ENCODE measurements at regions of chr17 and their contacts with region 1.

Region 1: DNA sequence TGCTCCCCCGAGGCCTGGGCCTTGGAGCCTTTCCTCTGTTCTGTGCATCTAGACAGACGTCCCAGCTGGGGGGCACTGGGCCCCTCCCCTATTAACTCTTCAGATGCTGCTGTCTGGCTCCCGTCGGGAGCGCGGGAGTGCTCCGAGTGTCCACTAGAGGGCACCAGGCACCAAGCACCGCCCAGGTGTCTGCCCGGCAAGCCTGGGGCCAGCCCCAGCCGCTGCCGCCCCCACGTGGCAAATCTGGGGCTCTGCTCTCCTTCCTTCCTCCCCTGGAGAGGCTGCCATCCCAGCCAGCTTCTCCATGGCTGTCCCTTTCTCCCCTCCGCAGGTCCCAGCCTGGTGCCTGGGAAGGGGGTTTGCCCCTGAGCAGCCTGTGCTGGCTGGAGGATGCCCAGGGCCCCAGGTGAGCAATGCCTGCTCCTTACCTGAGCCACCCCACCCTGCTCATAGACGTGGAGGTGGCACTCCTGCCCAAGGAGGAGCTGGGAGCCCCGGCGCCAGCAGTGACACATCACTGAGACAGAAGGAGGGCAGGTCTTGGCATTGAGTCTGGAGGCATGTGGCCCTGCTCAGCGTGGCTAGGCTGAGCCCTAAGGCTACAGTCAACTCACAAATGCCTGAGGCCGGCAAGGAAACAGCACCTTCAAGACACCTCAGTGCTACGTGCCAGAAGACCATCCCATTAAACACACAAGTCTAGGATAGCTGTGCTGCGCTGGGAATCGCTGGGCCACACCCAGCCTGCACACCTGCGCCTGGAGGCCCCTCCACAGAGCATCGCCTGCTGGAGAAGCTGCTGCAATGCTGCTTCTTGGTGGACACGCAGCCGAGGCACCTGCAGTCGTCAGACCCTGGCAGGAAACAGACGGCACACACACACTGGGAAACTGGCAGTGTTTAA is 19.7 kb downstream of the TMEM235 start:
- DNase-seq: peak; percentile 67 to 94 (median 89)

Region 2: GRCh38 chr17:77899498-77899897 is 351.6 kb before region 1 on chr17:
- intact Hi-C with region 1: no loop called
- DNase-seq: peak in 2 of 42 donors; percentile 13 to 20

Region 3: DNA sequence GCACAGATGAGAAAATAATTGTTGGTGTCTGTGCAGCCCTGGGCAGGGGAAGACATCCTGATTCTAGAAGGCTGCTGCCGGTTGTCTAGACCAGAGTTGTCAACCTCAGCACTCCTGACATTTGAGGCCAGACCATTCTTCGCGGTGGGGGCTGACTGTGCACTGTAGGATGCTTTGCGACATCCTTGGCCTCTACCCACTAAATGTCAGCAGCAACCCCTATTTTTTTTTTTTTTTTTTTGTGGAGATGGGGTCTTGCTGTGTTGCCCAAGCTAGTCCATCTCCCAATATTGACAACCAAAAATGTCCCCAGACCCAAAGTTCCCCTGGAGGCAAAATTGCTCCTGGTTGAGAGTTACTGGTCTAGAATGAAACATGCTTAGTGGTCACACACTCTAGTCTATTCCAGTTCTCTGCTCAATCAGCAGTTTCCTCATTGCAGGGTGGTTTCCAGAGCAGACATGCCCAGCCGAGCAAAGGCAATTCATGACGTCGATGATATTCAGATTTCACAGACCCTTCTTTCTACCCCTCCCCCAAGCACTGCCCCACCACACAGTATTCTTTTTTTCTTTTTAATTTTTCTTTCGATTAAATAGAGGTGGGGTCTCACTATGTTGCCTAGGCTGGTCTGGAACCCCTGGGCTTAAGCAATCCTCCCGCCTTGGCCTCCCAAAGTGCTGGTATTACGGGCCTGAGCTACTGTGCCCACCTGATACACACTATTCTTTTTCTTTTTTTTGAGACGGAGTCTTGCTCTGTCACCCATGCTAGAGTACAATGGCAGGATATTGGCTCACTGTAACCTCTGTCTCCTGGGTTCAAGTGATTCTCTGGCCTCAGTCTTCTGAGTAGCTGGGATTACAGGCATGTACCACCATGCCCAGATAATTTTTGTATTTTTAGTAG is 96.0 kb before region 1 on chr17:
- intact Hi-C with region 1: no loop called
- DNase-seq: no peak

Region 4: GRCh38 chr17:78176548-78177025 is 74.6 kb before region 1 on chr17:
- intact Hi-C with region 1: loop called (anchors 10 kb)
- DNase-seq: peak; percentile 59 to 89 (median 78)

Region 5: DNA sequence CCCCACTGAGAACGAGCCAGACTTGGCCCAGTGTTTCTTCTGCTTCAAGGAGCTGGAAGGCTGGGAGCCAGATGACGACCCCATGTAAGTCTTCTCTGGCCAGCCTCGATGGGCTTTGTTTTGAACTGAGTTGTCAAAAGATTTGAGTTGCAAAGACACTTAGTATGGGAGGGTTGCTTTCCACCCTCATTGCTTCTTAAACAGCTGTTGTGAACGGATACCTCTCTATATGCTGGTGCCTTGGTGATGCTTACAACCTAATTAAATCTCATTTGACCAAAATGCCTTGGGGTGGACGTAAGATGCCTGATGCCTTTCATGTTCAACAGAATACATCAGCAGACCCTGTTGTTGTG is 36.5 kb before region 1 on chr17:
- intact Hi-C with region 1: loop called (anchors 5 kb)
- DNase-seq: no peak

Region 6: DNA sequence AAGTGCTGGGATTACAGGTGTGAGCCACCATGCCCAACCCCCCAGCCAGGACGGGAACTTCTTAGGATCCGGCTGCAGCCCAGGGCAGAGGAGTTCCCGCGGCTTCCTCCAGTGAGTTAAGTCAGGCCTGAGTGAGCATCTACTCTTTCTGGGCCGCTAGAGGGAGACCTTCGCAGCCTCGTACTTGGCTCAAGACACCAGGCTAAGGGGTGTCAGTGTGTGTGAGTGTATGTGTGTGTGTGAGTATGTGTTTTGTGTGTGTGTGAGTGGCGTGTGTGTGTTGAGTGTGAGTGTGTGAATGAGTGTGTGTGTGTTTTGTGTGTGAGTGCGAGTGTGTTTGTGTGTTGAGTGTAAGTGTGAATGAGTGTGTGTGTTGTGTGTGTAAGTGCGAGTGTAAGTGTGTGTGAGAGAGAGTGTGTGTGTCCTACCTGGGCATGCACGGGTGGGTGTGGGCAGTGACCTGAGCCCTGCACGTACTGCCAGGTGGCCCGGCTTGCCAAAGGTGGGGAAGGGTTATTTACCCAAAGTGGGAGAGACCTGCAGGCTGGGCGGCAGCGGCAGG is 38.7 kb after region 1 on chr17:
- intact Hi-C with region 1: no loop called
- DNase-seq: peak; percentile 60 to 93 (median 80)

Measured in head of caudate nucleus (tissue), 42 donors.